ENCODE measurements at regions of chr5 and their contacts with region 1.

Region 1: GRCh38 chr5:32531885-32532520 is 53.4 kb upstream of the SUB1 start:
- DNase-seq: peak; percentile 66
- H3K4me3 Mint-ChIP-seq: peak overlapping the region; percentile 91
- H3K27ac Mint-ChIP-seq: peak overlapping the region; percentile 98
- H3K4me1 Mint-ChIP-seq: peaks cover 62% of the 10 kb centered on the region
- H3K27me3 Mint-ChIP-seq: no peaks in the 10 kb centered on the region

Region 2: DNA sequence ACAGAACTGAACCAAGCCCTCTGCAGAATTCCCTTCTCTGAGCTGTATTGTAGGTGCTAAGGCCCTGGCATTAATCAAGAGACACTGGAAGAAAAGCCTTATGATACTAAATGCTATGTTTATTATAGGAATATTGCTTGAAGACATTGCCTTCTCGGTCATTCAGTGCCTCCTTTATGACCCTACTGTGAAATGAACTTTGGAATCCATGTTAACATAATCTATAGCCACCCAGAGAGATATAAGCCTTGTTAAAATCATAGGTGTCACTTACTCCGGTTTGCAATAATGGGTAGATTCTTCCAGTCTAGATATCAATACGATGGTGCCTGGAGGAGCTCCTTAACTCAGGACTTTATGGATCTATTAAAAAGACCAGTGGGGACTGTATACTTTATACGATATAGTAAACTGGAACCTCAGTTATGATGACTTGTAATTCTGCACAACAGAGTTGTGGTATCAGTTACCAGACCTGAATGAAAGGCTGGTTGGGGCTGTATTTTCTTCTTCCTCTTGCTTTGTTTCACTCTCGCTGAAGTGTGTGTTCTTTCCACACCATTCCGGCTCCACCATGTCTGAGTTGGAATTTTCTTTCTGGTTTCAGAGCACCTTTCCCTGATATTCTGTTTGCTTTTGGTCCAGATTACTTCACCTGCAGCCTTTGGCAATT is 1154.6 kb before region 1 on chr5:
- intact Hi-C with region 1: no loop called
- DNase-seq: no peak
- H3K4me3 Mint-ChIP-seq: no peak overlapping the region
- H3K27ac Mint-ChIP-seq: no peak overlapping the region
- H3K4me1 Mint-ChIP-seq: no peaks in the 10 kb centered on the region
- H3K27me3 Mint-ChIP-seq: peaks cover 11% of the 10 kb centered on the region

Region 3: GRCh38 chr5:32283539-32284377 is 248.2 kb before region 1 on chr5:
- intact Hi-C with region 1: loop called (anchors 1 kb)
- DNase-seq: no peak
- H3K4me3 Mint-ChIP-seq: no peak overlapping the region
- H3K27ac Mint-ChIP-seq: peak overlapping the region; percentile 53
- H3K4me1 Mint-ChIP-seq: peaks cover 54% of the 10 kb centered on the region
- H3K27me3 Mint-ChIP-seq: no peaks in the 10 kb centered on the region

Region 4: DNA sequence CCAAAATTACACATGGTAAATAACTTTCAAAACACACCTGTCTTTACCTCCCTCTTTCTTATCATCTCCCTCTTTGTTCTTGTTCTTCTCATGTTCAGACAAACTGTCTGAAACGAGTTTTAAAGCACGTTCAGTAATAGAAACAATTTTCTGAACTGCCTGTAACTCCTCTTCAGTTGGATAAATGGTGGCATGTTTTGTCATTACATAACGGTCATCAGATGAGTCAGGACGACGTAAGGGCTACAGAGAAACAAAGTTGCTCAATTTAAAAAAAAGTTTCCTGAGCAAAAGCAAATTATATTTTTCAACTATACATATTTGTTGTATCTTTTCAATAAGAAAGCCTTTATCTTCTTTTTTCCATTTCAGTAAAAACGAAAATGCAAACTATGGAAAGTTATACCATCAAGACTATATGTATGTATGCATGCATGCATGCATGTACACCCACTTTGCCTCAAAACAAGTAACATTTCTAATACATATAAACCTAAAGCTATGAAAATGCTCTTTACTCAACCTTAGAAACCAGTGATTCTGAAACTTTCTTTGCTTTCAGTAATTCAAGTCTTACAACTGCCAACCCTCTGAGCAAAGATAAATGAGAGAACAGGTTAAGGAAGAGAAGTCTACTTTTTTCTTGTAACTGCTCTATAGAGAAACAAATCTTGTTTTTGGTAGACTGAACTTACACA is 143.4 kb before region 1 on chr5:
- intact Hi-C with region 1: loop called (anchors 5 kb)
- DNase-seq: no peak
- H3K4me3 Mint-ChIP-seq: peak overlapping the region; percentile 9
- H3K27ac Mint-ChIP-seq: peak overlapping the region; percentile 93
- H3K4me1 Mint-ChIP-seq: peaks cover 22% of the 10 kb centered on the region
- H3K27me3 Mint-ChIP-seq: no peaks in the 10 kb centered on the region

Region 5: GRCh38 chr5:32499261-32499660 is 32.7 kb before region 1 on chr5:
- intact Hi-C with region 1: loop called (anchors 1 kb)
- DNase-seq: no peak
- H3K4me3 Mint-ChIP-seq: no peak overlapping the region
- H3K27ac Mint-ChIP-seq: no peak overlapping the region
- H3K4me1 Mint-ChIP-seq: peaks cover 30% of the 10 kb centered on the region
- H3K27me3 Mint-ChIP-seq: peaks cover 3% of the 10 kb centered on the region